Activated CD4-positive, alpha-beta memory T cell treated with anti-CD3 and anti-CD28 coated beads, Interleukin-2, amount 10 ng/mL, durations not matched to agents 7 days and 5 days (primary cell): ENCODE measurements at regions of chr2 and their contacts with region 1.

Region 1: GRCh38 chr2:44167940-44168680 is 565 bp upstream of the PPM1B start:
- DNase-seq: peak; percentile 97
- H3K4me3 Mint-ChIP-seq: peak overlapping the region; percentile 99
- H3K27ac Mint-ChIP-seq: peak overlapping the region; percentile 99
- H3K4me1 Mint-ChIP-seq: peaks cover 36% of the 10 kb centered on the region
- H3K27me3 Mint-ChIP-seq: no peaks in the 10 kb centered on the region

Region 2: GRCh38 chr2:44237221-44237620 is 69.1 kb after region 1 on chr2:
- CTCF ChIA-PET with region 1: interaction called, 3 read pairs
- POLR2A ChIA-PET with region 1: interaction called, 12 read pairs
- DNase-seq: peak; percentile 39
- H3K4me3 Mint-ChIP-seq: peak overlapping the region; percentile 24
- H3K27ac Mint-ChIP-seq: peak overlapping the region; percentile 74
- H3K4me1 Mint-ChIP-seq: peaks cover 30% of the 10 kb centered on the region
- H3K27me3 Mint-ChIP-seq: no peaks in the 10 kb centered on the region

Region 3: GRCh38 chr2:44324971-44325426 is 156.9 kb after region 1 on chr2:
- CTCF ChIA-PET with region 1: no interaction called
- POLR2A ChIA-PET with region 1: no interaction called
- DNase-seq: no peak
- H3K4me3 Mint-ChIP-seq: no peak overlapping the region
- H3K27ac Mint-ChIP-seq: no peak overlapping the region
- H3K4me1 Mint-ChIP-seq: no peaks in the 10 kb centered on the region
- H3K27me3 Mint-ChIP-seq: no peaks in the 10 kb centered on the region